RWPE1 (cell line): ENCODE measurements at regions of chr2 and their contacts with region 1.

Region 1: DNA sequence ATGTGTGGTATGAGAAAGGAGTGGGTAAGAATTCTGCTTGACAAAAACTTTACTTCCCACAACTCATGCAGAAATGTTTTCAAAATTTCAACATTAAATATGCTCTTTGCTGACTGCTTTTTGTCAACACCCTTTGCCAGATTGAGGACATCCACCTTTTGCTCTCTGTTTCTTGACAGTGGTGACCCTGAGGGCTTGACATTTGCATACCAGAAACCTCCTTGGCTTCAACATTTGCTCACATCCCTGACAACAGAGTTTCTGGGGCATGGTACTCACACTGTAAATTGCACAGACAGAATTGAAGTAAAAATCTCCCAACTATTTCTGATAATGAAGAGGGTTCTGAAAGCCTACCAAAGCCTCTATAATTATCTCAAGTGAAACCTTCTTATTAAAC is 95.7 kb downstream of the RND3 start:
- DNase-seq: no peak
- H3K27ac ChIP-seq: no peak overlapping the region
- CTCF ChIP-seq: no peak

Region 2: DNA sequence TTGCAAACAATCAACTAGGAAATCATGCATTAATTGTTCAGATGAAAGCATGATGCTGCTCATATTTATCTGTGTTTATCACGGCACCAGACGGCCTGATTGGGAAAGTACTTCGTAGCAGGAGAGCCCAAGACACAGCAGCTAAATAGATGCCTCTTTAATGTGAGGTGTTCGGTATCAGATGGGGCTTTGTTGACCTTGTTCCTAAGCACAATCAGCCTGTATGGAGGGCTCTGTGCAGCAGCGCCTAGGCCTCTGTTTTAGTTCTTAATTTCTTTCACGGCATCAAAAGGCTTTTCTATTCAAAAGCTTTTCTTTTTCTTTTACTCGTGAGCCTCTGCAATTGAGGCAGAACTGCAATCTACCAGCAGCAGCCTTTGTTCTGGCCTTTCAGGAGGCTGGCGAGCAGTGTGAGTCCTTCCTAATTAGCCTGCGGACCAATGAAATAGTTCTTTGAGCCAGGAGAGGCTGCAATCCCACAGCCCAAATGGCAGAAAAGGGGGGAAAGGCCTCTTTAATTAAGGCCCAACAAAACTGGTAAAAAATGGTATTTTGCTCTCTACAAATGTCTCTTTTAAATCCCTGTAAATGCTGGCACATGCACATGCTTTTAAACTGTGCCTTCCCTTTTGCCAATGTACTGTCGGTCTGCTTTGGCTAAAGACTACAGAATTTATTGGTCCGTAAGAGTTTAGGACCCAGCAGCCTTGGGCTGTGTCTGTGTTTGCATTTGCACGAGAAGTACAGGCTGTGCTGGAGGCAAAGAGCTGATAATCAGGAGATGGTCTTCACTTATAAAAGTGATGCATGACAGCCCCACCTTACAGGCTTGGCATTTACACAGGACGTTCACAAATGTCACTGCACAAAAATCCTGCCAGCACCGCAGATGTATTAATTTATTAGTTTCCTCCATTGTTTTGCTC is 64.0 kb before region 1 on chr2:
- CTCF ChIA-PET with region 1: no interaction called
- POLR2A ChIA-PET with region 1: no interaction called
- DNase-seq: no peak
- H3K27ac ChIP-seq: no peak overlapping the region
- CTCF ChIP-seq: no peak

Region 3: GRCh38 chr2:150410809-150411208 is 19.0 kb after region 1 on chr2:
- CTCF ChIA-PET with region 1: interaction called, 3 read pairs
- POLR2A ChIA-PET with region 1: interaction called, 13 read pairs
- DNase-seq: peak; percentile 3
- H3K27ac ChIP-seq: no peak overlapping the region
- CTCF ChIP-seq: no peak